Psoas muscle (tissue), 8 donors: ENCODE measurements at regions of chr18 and their contacts with region 1.

Region 1: DNA sequence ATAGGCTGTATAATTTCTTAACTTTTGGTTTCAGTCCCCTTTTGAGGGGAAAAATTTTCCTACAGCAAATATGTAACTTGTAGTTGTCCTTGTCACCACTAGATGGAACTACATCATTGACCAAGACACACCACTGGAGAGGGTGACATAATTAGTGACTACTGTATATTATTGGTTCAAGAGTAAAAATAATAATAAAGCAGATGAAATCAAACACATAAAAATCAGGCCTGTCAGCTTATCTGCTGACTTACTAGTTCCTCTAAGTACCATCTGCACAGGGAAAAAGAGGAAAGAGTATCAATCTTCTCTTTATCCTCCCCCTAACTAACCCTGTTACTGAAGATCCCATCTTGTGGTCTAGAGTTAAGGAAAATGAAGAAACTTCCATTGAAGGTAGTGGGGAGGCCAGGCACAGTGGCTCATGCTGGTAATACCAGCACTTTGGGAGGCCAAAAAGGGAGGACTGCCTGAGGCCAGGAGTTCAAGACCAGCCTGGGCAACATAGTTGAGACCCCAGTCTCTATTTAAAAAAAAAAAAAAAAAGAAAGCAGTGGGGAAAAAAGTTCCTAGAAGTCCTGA is 29.6 kb upstream of the ENOSF1 start:
- DNase-seq: no peak
- ATAC-seq: peak; percentile 54 to 89 (median 70)
- H3K4me3 ChIP-seq: no peak overlapping the region
- H3K27ac ChIP-seq: no peak overlapping the region
- H3K4me1 ChIP-seq: no peaks in the 10 kb centered on the region
- H3K27me3 ChIP-seq: no peaks in the 10 kb centered on the region
- CTCF ChIP-seq: peak; percentile 80

Region 2: GRCh38 chr18:191725-192124 is 550.3 kb before region 1 on chr18:
- intact Hi-C with region 1: no loop called
- DNase-seq: no peak
- ATAC-seq: peak in 1 of 4 donors; percentile 55
- H3K4me3 ChIP-seq: no peak overlapping the region
- H3K27ac ChIP-seq: no peak overlapping the region
- H3K4me1 ChIP-seq: peaks cover 4% of the 10 kb centered on the region
- H3K27me3 ChIP-seq: no peaks in the 10 kb centered on the region
- CTCF ChIP-seq: no peak

Region 3: DNA sequence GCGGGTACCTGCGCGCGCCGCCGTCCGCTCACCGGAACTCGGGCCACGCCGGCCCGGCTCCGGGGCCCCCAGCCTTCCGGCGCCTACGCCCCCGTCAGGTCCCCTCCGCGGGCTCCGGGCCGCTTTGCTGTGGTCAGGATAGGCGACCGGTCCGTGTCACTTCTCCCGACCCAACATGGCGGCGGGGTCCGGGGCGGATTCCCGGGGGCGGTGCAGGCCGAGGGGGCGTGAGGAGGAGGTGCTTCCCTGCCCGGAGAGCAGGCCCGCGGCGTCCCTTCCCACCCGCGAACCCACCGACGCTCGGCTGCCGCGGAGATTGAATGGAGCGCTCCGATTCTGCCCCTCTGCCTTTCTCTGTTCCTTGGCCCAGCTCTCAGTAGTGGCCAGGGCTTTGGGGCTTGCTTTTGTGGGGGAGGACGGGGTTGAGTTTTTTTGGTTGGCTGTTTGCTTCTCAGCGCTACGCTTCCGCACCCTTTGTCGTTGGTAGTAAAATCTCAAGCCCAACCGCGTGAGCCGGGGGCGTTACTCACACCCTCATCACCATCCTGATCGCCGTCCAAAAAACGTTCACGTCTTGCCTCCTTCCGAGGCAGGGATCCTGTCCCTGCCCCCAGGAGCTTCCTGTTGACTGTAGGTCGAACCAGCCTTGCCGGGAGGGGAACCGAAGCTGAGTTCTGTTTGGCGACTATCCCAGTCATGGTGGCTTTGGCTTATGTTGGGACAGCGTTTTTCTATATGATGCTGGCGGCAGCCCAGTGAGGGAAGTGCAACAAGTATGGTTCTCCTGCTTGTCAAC is 70.6 kb after region 1 on chr18:
- intact Hi-C with region 1: loop called (anchors 5 kb)
- DNase-seq: peak; percentile 83 to 89
- ATAC-seq: peak; percentile 64 to 83 (median 77)
- H3K4me3 ChIP-seq: peak overlapping the region; percentile 96
- H3K27ac ChIP-seq: peak overlapping the region; percentile 95
- H3K4me1 ChIP-seq: peaks cover 39% of the 10 kb centered on the region
- H3K27me3 ChIP-seq: no peaks in the 10 kb centered on the region
- CTCF ChIP-seq: no peak

Region 4: GRCh38 chr18:830315-830901 is 88.4 kb after region 1 on chr18:
- intact Hi-C with region 1: loop called (anchors 1 to 5 kb)
- DNase-seq: no peak
- ATAC-seq: peak in 2 of 4 donors; percentile 43 to 65
- H3K4me3 ChIP-seq: no peak overlapping the region
- H3K27ac ChIP-seq: peak overlapping the region; percentile 0
- H3K4me1 ChIP-seq: peaks cover 3% of the 10 kb centered on the region
- H3K27me3 ChIP-seq: no peaks in the 10 kb centered on the region
- CTCF ChIP-seq: no peak